Activated CD8-positive, alpha-beta T cell treated with anti-CD3 and anti-CD28 coated beads for 36 hours (primary cell): ENCODE measurements at regions of chr5 and their contacts with region 1.

Region 1: DNA sequence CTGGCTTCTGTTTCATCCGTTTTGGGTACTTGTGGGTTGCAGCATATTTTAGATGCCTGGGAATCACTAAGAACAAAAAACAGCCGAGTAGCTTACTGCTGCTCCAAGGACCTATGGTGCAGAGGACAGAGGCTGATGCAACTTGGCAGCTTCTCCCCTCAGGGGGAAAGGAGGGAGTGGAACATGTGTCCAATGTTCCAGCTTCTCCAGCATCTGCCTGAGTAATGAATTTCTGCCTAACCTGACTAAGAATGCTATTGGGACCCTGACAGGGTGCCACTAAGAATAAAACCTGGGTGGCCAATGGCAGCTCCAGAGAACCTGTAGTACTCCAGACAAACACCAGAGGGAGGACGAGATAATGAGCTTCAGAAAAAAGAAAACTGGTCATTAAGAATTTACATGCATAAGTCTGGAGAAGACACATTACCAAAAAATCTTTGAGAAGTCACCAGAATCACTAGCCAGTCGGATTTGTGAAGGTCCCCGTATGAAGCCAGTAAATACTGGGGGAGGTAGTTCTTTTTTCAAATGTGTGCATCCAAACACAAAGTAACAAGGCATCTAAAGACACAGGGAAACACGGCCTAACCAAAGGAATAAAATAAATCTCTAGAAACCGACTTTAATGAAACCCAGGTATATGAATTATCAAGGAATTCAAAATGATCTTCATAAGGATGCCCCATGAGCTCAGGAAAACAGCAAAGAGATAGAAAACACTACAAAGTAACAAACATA is 293.5 kb downstream of the HINT1 start:
- DNase-seq: peak; percentile 44
- ATAC-seq: peak; percentile 82
- H3K4me3 Mint-ChIP-seq: no peak overlapping the region
- H3K27ac Mint-ChIP-seq: no peak overlapping the region
- H3K4me1 Mint-ChIP-seq: no peaks in the 10 kb centered on the region
- H3K27me3 Mint-ChIP-seq: no peaks in the 10 kb centered on the region
- CTCF ChIP-seq: peak; percentile 70

Region 2: GRCh38 chr5:130885027-130885426 is 13.5 kb after region 1 on chr5:
- CTCF ChIA-PET with region 1: interaction called, 11 read pairs
- POLR2A ChIA-PET with region 1: no interaction called
- intact Hi-C with region 1: no loop called
- DNase-seq: no peak
- ATAC-seq: no peak
- H3K4me3 Mint-ChIP-seq: no peak overlapping the region
- H3K27ac Mint-ChIP-seq: no peak overlapping the region
- H3K4me1 Mint-ChIP-seq: peaks cover 6% of the 10 kb centered on the region
- H3K27me3 Mint-ChIP-seq: peaks cover 3% of the 10 kb centered on the region
- CTCF ChIP-seq: no peak

Region 3: GRCh38 chr5:131109540-131110255 is 238.2 kb after region 1 on chr5:
- CTCF ChIA-PET with region 1: interaction called, 30 read pairs
- POLR2A ChIA-PET with region 1: interaction called, 3 read pairs
- intact Hi-C with region 1: loop called (anchors 1 kb)
- DNase-seq: peak; percentile 50
- ATAC-seq: peak; percentile 82
- H3K4me3 Mint-ChIP-seq: no peak overlapping the region
- H3K27ac Mint-ChIP-seq: no peak overlapping the region
- H3K4me1 Mint-ChIP-seq: peaks cover 8% of the 10 kb centered on the region
- H3K27me3 Mint-ChIP-seq: no peaks in the 10 kb centered on the region
- CTCF ChIP-seq: peak; percentile 87

Region 4: GRCh38 chr5:131114754-131115153 is 243.2 kb after region 1 on chr5:
- CTCF ChIA-PET with region 1: interaction called, 30 read pairs
- POLR2A ChIA-PET with region 1: no interaction called
- intact Hi-C with region 1: loop called (anchors 1 kb)
- DNase-seq: no peak
- ATAC-seq: no peak
- H3K4me3 Mint-ChIP-seq: no peak overlapping the region
- H3K27ac Mint-ChIP-seq: no peak overlapping the region
- H3K4me1 Mint-ChIP-seq: peaks cover 10% of the 10 kb centered on the region
- H3K27me3 Mint-ChIP-seq: no peaks in the 10 kb centered on the region
- CTCF ChIP-seq: no peak